ENCODE measurements at regions of chr2 and their contacts with region 1.

Region 1: GRCh38 chr2:98691303-98691702 is 39.6 kb downstream of the MGAT4A start:
- DNase-seq: no peak
- ATAC-seq: peak; percentile 43
- H3K4me3 Mint-ChIP-seq: peak overlapping the region; percentile 20
- H3K27ac Mint-ChIP-seq: peak overlapping the region; percentile 96
- H3K4me1 Mint-ChIP-seq: peaks cover 86% of the 10 kb centered on the region
- H3K27me3 Mint-ChIP-seq: no peaks in the 10 kb centered on the region

Region 2: DNA sequence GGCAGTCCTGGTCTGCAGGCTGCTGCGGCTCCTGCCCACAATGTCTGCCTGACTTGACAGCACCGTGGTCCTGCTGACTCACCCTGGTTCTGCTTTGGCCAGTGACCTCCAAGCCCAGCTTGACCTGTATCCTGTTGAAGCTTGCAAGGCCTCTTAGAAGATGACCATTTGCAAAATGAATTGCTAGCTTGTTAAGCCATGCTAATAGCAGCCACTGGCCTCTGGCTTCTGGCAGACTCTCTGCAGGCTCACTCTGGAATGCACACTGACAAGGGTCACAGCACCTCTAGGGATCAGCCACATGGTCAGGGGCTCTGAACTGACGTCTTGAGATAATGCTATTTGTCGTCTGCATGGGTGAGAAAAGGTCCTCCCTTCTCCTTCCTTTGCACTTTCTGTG is 319.2 kb before region 1 on chr2:
- CTCF ChIA-PET with region 1: no interaction called
- POLR2A ChIA-PET with region 1: no interaction called
- intact Hi-C with region 1: no loop called
- DNase-seq: no peak
- ATAC-seq: no peak
- H3K4me3 Mint-ChIP-seq: no peak overlapping the region
- H3K27ac Mint-ChIP-seq: no peak overlapping the region
- H3K4me1 Mint-ChIP-seq: no peaks in the 10 kb centered on the region
- H3K27me3 Mint-ChIP-seq: peaks cover 17% of the 10 kb centered on the region

Region 3: GRCh38 chr2:98654699-98655495 is 36.4 kb before region 1 on chr2:
- CTCF ChIA-PET with region 1: interaction called, 7 read pairs
- POLR2A ChIA-PET with region 1: interaction called, 4 read pairs
- intact Hi-C with region 1: loop called (anchors 1 to 5 kb)
- DNase-seq: peak; percentile 48
- ATAC-seq: peak; percentile 38
- H3K4me3 Mint-ChIP-seq: peak overlapping the region; percentile 42
- H3K27ac Mint-ChIP-seq: peak overlapping the region; percentile 72
- H3K4me1 Mint-ChIP-seq: peaks cover 80% of the 10 kb centered on the region
- H3K27me3 Mint-ChIP-seq: no peaks in the 10 kb centered on the region

Region 4: GRCh38 chr2:98676742-98677141 is 14.6 kb before region 1 on chr2:
- CTCF ChIA-PET with region 1: interaction called, 10 read pairs
- POLR2A ChIA-PET with region 1: no interaction called
- intact Hi-C with region 1: loop called in 1 of 2 experiments (anchors 2 kb)
- DNase-seq: no peak
- ATAC-seq: no peak
- H3K4me3 Mint-ChIP-seq: no peak overlapping the region
- H3K27ac Mint-ChIP-seq: no peak overlapping the region
- H3K4me1 Mint-ChIP-seq: peaks cover 47% of the 10 kb centered on the region
- H3K27me3 Mint-ChIP-seq: no peaks in the 10 kb centered on the region